ENCODE measurements at regions of chr13 and their contacts with region 1.

Region 1: DNA sequence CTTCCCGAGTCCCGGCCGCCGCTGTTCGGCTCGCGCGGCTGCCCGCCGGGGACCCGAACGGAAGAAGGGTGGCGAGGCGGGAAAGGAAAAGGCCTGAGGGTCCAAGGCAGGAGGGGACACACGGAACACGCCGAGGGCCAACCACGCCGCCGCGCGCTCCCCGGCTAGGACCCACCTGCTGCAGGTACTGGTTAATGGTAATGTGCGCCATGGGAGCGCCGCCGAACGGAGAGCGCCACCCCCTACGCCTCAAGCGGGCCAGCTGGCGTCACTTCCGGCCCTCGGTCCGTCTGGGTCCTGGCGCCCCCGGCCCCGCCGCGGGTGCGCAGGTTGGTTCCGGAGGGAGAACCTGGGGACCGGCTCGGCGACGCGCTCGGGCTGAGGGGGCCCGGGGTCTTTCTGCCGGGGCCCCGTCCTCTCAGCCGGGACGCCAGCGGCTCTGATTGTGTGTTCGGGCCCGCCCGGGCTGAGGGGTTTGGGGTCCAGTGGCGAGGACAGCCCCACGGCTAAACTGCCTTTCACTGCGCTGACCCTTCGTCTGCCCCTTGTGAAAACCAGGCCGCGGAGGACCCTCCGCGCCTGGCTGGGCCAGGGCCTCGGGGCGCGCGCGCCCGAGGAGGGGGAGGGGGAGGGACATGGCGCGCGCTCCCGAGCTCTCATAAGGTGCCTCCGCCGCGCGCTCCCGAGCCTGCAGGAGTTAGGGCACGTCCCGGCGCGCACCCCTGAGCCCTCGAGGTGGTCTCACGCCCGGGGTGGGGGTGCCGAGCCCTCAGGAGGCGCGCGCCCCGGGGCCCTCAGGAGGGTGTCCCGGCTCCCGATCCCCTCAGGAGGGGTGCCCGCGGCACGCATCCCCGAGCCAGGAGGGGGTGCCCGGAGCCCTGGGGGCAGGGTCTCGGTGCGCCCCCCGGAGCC is at the start of gene PCID2:
- DNase-seq: peak; percentile 87
- H3K4me3 Mint-ChIP-seq: peak within 1 kb of the TSS; percentile 82
- H3K27ac Mint-ChIP-seq: peak within 1 kb of the TSS; percentile 53
- H3K4me1 Mint-ChIP-seq: peaks cover 45% of the 10 kb centered on the region
- H3K27me3 Mint-ChIP-seq: no peaks in the 10 kb centered on the region
- total RNA-seq, gene PCID2: 67.1 and 67.6 TPM in 2 replicates

Region 2: GRCh38 chr13:113153810-113154748 is 54.6 kb before region 1 on chr13:
- intact Hi-C with region 1: loop called (anchors 2 kb)
- DNase-seq: peak; percentile 43
- H3K4me3 Mint-ChIP-seq: peak overlapping the region; percentile 68
- H3K27ac Mint-ChIP-seq: no peak overlapping the region
- H3K4me1 Mint-ChIP-seq: peaks cover 14% of the 10 kb centered on the region
- H3K27me3 Mint-ChIP-seq: peaks cover 31% of the 10 kb centered on the region

Region 3: DNA sequence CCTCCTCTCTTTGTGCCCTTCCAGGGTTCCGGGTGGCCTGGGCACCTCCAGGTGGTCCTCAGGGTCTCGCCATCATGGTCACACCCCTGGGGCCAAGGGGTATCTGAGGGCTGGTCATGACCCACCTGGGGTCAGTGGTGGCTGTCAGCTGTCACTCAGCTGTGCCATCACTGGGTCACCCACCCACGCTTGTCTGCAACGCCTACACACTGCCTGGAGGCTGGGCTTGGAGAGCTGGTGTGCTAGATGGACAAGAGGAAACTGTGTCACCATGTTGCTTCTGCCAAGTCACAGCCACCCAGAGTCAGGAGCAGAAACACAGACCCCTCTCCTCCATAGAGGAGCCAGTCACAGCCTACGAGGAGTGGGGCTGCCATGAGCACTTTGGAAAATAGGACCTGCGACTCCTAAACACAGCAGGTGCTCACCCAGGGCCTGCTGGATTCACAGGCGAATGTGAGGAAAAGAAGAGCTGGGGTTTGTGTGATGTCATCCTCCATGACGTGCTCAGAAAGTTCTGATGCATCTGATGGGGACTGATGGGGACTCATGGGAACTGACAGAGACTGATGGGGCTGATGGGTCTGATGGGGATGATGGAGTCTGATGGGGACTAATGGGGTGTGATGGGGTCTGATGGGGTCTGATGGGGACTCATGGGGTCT is 166.0 kb after region 1 on chr13:
- intact Hi-C with region 1: no loop called
- DNase-seq: no peak
- H3K4me3 Mint-ChIP-seq: no peak overlapping the region
- H3K27ac Mint-ChIP-seq: no peak overlapping the region
- H3K4me1 Mint-ChIP-seq: no peaks in the 10 kb centered on the region
- H3K27me3 Mint-ChIP-seq: no peaks in the 10 kb centered on the region

Region 4: GRCh38 chr13:113398963-113399661 is 190.4 kb after region 1 on chr13:
- intact Hi-C with region 1: no loop called
- DNase-seq: no peak
- H3K4me3 Mint-ChIP-seq: no peak overlapping the region
- H3K27ac Mint-ChIP-seq: no peak overlapping the region
- H3K4me1 Mint-ChIP-seq: no peaks in the 10 kb centered on the region
- H3K27me3 Mint-ChIP-seq: no peaks in the 10 kb centered on the region

Region 5: GRCh38 chr13:114132419-114133121 is 923.9 kb after region 1 on chr13 and contains the start of gene RASA3:
- intact Hi-C with region 1: loop called (anchors 5 kb)
- DNase-seq: peak; percentile 55
- H3K4me3 Mint-ChIP-seq: peak within 1 kb of the TSS; percentile 93
- H3K27ac Mint-ChIP-seq: peak within 1 kb of the TSS; percentile 87
- H3K4me1 Mint-ChIP-seq: peaks cover 34% of the 10 kb centered on the region
- H3K27me3 Mint-ChIP-seq: peaks cover 13% of the 10 kb centered on the region
- total RNA-seq, gene RASA3: 13.7 and 13.9 TPM in 2 replicates